ENCODE measurements at regions of chr3 and their contacts with region 1.

Region 1: DNA sequence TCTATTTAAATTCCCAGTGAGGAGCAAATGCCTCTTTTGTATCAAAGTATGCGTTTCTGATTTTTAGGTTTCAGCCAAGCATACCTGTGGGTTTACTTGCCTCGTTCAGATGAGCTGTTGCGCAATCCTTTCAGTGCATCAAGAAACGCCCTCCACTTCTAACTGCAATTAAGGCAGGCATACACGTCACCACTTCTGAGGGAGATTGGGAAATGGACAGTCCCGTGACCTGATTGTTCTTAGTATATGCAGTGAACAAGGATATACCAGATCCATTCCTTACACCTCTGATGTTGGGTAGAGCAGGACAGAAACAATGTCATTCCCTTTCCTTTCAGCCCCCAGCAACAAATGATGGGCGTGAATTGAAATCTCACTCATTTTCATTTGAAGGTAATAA is 219.0 kb downstream of the ITPR1 start:
- DNase-seq: no peak
- ATAC-seq: no peak
- H3K4me3 Mint-ChIP-seq: no peak overlapping the region
- H3K27ac Mint-ChIP-seq: no peak overlapping the region
- H3K4me1 Mint-ChIP-seq: peaks cover 31% of the 10 kb centered on the region
- H3K27me3 Mint-ChIP-seq: no peaks in the 10 kb centered on the region

Region 2: GRCh38 chr3:4429648-4430350 is 282.3 kb before region 1 on chr3:
- CTCF ChIA-PET with region 1: no interaction called
- POLR2A ChIA-PET with region 1: no interaction called
- DNase-seq: no peak
- ATAC-seq: no peak
- H3K4me3 Mint-ChIP-seq: no peak overlapping the region
- H3K27ac Mint-ChIP-seq: no peak overlapping the region
- H3K4me1 Mint-ChIP-seq: peaks cover 9% of the 10 kb centered on the region
- H3K27me3 Mint-ChIP-seq: no peaks in the 10 kb centered on the region

Region 3: DNA sequence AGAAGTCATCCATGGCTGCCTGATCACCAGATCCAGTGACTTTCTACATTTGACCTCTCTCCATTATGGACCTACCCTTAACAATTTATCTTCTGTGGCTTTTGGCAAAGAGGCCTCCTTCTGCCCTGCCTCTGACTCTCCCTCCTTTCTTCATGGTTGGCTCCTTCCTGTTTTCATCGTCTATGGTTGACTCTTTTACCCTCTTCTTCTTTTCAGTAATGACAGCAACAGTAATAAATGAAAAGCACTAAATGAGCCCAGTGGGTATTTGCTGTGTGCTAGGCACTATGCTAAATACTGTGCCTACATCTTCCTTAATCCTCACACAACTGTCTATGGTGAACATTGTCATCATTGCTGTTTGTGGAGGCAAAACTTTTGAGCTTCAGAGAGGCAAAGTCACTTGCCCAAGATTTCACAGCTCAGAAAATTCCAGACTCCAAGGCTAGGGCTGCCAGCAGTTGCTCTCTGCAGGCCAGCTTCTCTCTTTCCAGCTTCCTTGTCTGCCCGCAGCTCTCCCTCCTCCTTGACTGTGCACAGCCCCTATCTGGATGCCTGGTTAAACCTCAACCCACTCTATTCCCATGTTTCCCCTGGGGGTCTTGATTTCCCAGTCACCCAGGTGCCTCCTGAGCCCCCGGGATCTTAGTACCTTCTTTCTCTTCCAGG is 194.4 kb before region 1 on chr3:
- CTCF ChIA-PET with region 1: interaction called, 17 read pairs
- POLR2A ChIA-PET with region 1: no interaction called
- DNase-seq: no peak
- ATAC-seq: no peak
- H3K4me3 Mint-ChIP-seq: no peak overlapping the region
- H3K27ac Mint-ChIP-seq: peak overlapping the region; percentile 84
- H3K4me1 Mint-ChIP-seq: peaks cover 29% of the 10 kb centered on the region
- H3K27me3 Mint-ChIP-seq: no peaks in the 10 kb centered on the region

Region 4: GRCh38 chr3:4601892-4602291 is 110.3 kb before region 1 on chr3:
- CTCF ChIA-PET with region 1: no interaction called
- POLR2A ChIA-PET with region 1: no interaction called
- DNase-seq: no peak
- ATAC-seq: no peak
- H3K4me3 Mint-ChIP-seq: no peak overlapping the region
- H3K27ac Mint-ChIP-seq: no peak overlapping the region
- H3K4me1 Mint-ChIP-seq: no peaks in the 10 kb centered on the region
- H3K27me3 Mint-ChIP-seq: no peaks in the 10 kb centered on the region

Region 5: GRCh38 chr3:4826237-4827100 is 114.3 kb after region 1 on chr3:
- CTCF ChIA-PET with region 1: interaction called, 26 read pairs
- POLR2A ChIA-PET with region 1: interaction called, 3 read pairs
- DNase-seq: no peak
- ATAC-seq: no peak
- H3K4me3 Mint-ChIP-seq: peak overlapping the region; percentile 78
- H3K27ac Mint-ChIP-seq: peak overlapping the region; percentile 86
- H3K4me1 Mint-ChIP-seq: peaks cover 94% of the 10 kb centered on the region
- H3K27me3 Mint-ChIP-seq: no peaks in the 10 kb centered on the region

Region 6: DNA sequence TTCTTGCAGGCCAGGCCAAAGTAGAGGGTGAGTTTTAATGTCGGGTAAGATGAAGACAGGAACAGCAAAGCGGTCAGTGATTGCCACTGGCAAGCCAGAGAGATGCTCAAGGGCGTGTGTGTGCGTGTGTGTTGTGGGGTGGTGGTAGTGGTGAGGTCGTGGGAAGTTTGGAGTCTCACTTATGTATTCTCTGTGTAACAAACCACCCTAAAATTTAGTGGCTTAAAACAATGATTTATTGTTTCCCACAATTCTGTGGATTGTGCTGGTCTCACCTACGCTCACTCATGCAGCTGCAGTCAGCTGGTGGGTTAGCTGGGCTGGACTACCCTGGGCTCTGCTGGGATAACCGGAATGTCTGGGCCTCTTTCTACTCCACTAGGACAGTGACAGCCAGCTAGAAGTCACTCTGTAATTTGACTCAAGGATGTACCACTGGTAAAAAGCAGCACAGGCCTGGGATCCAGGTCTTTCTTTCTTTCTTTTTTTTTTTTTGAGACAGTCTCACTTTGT is 216.2 kb after region 1 on chr3:
- CTCF ChIA-PET with region 1: interaction called, 10 read pairs
- POLR2A ChIA-PET with region 1: no interaction called
- DNase-seq: peak; percentile 47
- ATAC-seq: peak; percentile 60
- H3K4me3 Mint-ChIP-seq: no peak overlapping the region
- H3K27ac Mint-ChIP-seq: peak overlapping the region; percentile 76
- H3K4me1 Mint-ChIP-seq: peaks cover 33% of the 10 kb centered on the region
- H3K27me3 Mint-ChIP-seq: no peaks in the 10 kb centered on the region

Region 7: DNA sequence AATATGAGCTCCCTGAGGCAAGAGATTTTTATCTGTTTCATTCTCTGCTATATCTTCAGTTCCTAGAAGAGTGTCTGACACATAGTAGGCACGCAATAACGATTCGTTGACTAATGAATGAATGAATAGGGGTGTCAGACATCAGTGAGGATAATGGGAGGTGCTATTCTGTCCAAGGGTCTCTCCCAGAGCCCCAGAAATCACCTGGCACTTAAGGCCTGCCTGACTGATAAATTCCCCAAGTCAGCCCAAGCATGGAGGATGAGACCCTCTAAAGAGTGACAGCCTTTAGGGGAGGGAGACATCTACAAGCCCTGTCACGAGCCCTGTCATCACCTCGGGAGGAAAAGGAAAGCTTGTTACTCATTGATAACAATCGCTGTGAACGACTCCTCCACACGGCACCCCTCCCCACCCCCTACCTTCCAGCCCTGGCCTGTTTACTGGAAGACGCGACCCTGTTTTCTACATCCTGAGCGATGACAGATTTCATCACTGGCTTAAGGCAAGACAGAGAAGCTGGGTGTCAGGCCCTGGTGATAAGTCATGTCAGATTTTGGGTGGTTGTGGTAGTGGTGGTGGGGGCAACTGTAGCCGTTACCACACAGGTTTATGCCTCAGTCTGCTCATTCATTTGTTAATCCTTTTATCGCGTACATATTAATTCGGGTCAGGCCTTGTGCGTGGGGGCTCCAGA is 290.2 kb after region 1 on chr3:
- CTCF ChIA-PET with region 1: interaction called, 23 read pairs
- POLR2A ChIA-PET with region 1: no interaction called
- DNase-seq: peak; percentile 66
- ATAC-seq: peak; percentile 50
- H3K4me3 Mint-ChIP-seq: peak overlapping the region; percentile 47
- H3K27ac Mint-ChIP-seq: peak overlapping the region; percentile 84
- H3K4me1 Mint-ChIP-seq: peaks cover 85% of the 10 kb centered on the region
- H3K27me3 Mint-ChIP-seq: no peaks in the 10 kb centered on the region

Region 8: DNA sequence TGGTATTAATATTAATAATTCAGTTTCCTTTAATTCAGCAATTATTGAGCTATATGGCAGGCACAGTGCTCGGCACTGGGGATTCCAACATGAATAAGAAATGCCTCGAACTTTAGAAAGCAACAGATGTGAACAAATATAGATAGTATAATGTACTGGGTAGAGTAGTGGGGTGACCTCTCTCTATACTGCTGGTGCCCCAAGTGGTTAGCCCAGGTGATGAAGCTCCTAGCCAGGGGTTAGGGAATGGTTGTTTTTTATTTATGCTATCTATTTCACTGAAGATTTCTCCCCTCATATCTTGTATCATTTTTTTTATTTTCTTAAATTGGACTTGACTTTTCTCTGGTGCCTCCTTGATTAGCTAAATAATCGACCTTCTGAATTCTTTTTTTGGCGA is 329.2 kb after region 1 on chr3:
- CTCF ChIA-PET with region 1: interaction called, 20 read pairs
- POLR2A ChIA-PET with region 1: no interaction called
- DNase-seq: no peak
- ATAC-seq: no peak
- H3K4me3 Mint-ChIP-seq: no peak overlapping the region
- H3K27ac Mint-ChIP-seq: no peak overlapping the region
- H3K4me1 Mint-ChIP-seq: peaks cover 31% of the 10 kb centered on the region
- H3K27me3 Mint-ChIP-seq: no peaks in the 10 kb centered on the region

Measured in activated CD8-positive, alpha-beta T cell treated with anti-CD3 and anti-CD28 coated beads, Interleukin-2, amount 10 ng/mL, durations not matched to agents 7 days and 5 days (primary cell).